CD4-positive, alpha-beta T cell (primary cell): ENCODE measurements at regions of chr6 and their contacts with region 1.

Region 1: DNA sequence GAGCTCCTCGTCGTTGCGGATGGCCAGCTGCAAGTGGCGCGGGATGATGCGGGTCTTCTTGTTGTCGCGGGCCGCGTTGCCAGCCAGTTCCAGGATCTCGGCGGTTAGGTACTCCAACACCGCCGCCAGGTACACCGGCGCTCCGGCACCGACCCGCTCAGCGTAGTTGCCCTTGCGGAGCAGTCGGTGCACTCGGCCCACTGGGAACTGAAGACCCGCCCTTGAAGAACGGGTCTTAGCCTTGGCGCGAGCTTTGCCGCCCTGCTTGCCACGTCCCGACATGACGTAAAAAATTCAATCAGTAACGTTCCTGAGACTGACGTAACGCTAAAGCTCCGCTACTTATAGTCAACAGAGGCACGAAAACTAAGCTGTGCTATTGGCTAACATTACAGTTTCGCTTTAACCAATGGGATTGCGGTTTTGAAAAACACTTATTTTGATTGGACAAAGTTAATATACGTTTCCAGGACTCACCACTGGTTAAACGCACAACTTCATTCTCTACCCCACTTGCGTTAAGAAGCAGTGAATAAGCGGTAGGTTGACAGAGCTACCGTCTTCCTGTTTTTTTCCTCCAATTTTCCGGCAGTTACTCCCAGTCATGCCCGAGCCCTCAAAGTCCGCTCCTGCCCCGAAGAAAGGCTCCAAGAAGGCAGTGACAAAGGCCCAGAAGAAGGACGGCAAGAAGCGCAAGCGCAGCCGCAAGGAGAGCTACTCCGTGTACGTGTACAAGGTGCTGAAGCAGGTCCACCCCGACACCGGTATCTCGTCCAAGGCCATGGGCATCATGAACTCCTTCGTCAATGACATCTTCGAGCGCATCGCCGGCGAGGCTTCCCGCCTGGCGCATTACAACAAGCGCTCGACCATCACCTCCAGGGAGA is 73.9 kb downstream of the OR2B2 start:
- DNase-seq: peak; percentile 52 to 98 (median 73)
- ATAC-seq: peak; percentile 73
- H3K4me3 ChIP-seq: peak overlapping the region; percentile 83
- H3K4me3 Mint-ChIP-seq: no peak overlapping the region
- H3K27ac ChIP-seq: peak overlapping the region; percentile 92 to 97
- H3K27ac Mint-ChIP-seq: no peak overlapping the region
- H3K4me1 ChIP-seq: peaks cover 32% of the 10 kb centered on the region
- H3K4me1 Mint-ChIP-seq: peaks cover 6% of the 10 kb centered on the region
- H3K27me3 ChIP-seq: peaks cover 0 to 6% of the 10 kb centered on the region in 2 experiments
- H3K27me3 Mint-ChIP-seq: peaks cover 12% of the 10 kb centered on the region
- CTCF ChIP-seq: no peak

Region 2: GRCh38 chr6:26045065-26045927 is 1793.0 kb before region 1 on chr6:
- CTCF ChIA-PET with region 1: no interaction called
- POLR2A ChIA-PET with region 1: interaction called, 57 read pairs
- intact Hi-C with region 1: no loop called
- DNase-seq: peak; percentile 49 to 96 (median 74)
- ATAC-seq: peak; percentile 55
- H3K4me3 ChIP-seq: peak overlapping the region; percentile 70
- H3K4me3 Mint-ChIP-seq: peak overlapping the region; percentile 97
- H3K27ac ChIP-seq: peak overlapping the region; percentile 71 to 91
- H3K27ac Mint-ChIP-seq: peak overlapping the region; percentile 94
- H3K4me1 ChIP-seq: peaks cover 21% of the 10 kb centered on the region
- H3K4me1 Mint-ChIP-seq: peaks cover 28% of the 10 kb centered on the region
- H3K27me3 ChIP-seq: no peaks in the 10 kb centered on the region
- H3K27me3 Mint-ChIP-seq: no peaks in the 10 kb centered on the region
- CTCF ChIP-seq: no peak

Region 3: GRCh38 chr6:26234421-26235296 is 1603.6 kb before region 1 on chr6:
- CTCF ChIA-PET with region 1: no interaction called
- POLR2A ChIA-PET with region 1: interaction called, 52 read pairs
- intact Hi-C with region 1: no loop called
- DNase-seq: peak; percentile 46 to 96 (median 67)
- ATAC-seq: peak; percentile 73
- H3K4me3 ChIP-seq: peak overlapping the region; percentile 66
- H3K4me3 Mint-ChIP-seq: peak overlapping the region; percentile 100
- H3K27ac ChIP-seq: peak overlapping the region; percentile 78 to 87
- H3K27ac Mint-ChIP-seq: peak overlapping the region; percentile 99
- H3K4me1 ChIP-seq: peaks cover 19% of the 10 kb centered on the region
- H3K4me1 Mint-ChIP-seq: peaks cover 42% of the 10 kb centered on the region
- H3K27me3 ChIP-seq: no peaks in the 10 kb centered on the region
- H3K27me3 Mint-ChIP-seq: peaks cover 8% of the 10 kb centered on the region
- CTCF ChIP-seq: no peak

Region 4: DNA sequence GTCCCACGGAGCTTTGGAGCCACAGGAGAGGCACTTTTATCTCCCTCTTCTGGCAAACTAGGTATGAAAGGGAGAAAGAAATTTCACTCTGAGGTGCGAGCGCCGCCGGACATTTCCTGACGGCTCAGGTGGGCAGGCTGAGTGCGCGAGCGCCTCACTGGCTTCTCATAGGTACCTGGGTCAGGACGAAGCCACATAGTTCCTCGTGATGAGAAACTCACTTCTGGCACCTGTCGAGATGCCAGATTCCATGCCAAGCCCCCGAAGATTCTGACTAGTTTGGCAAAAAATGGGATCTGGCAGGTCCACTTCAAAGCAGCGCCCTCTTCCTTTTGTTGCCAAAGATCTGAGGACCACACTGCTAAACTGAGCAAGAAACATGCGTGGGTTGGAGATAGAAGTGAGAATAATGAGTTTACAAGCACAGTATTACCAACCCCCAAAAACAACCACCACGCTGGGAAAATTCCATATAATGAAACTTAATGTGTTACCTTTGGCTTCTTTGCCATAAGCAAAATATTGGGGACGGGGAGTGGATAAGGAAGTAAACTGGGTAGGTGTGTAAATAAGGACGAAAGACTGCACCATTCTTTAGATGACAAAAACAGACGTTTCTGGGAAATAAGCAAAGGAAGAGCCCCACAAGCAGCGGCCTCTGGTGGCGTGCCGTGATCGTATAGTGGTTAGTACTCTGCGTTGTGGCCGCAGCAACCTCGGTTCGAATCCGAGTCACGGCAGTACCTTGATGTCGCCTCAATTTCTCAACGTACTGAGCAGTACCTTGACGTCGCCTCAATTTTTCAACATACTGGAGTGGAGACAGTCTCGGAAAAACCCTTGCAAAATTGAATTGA is 680.6 kb before region 1 on chr6:
- CTCF ChIA-PET with region 1: no interaction called
- POLR2A ChIA-PET with region 1: interaction called, 10 read pairs
- intact Hi-C with region 1: no loop called
- DNase-seq: peak; percentile 73 to 93 (median 85)
- ATAC-seq: peak; percentile 88
- H3K4me3 ChIP-seq: peak overlapping the region; percentile 59
- H3K4me3 Mint-ChIP-seq: peak overlapping the region; percentile 90
- H3K27ac ChIP-seq: peak overlapping the region in 1 of 2 donors; percentile 32
- H3K27ac Mint-ChIP-seq: peak overlapping the region; percentile 96
- H3K4me1 ChIP-seq: peaks cover 22% of the 10 kb centered on the region
- H3K4me1 Mint-ChIP-seq: peaks cover 44% of the 10 kb centered on the region
- H3K27me3 ChIP-seq: no peaks in the 10 kb centered on the region
- H3K27me3 Mint-ChIP-seq: peaks cover 7% of the 10 kb centered on the region
- CTCF ChIP-seq: peak; percentile 78

Region 5: DNA sequence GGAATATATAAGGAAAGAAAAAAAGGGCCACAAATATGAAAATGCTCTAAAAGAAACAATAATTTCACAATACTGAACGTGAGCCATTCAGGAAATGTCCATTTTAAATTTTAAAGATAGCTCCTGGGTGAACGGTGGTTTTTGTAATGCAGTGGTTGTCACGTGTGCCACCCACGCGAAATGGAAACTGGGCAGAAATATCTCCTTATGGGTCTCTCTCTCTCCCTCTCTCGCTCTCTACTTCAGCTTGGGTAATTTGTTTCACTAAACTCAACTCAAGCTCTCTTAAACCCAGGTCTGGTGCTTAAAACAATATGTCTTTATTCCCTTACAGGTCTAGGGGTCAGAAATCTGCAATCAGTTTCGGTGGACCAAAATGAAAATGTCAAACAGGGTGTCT is 76.9 kb before region 1 on chr6:
- CTCF ChIA-PET with region 1: no interaction called
- POLR2A ChIA-PET with region 1: interaction called, 22 read pairs
- intact Hi-C with region 1: no loop called
- DNase-seq: peak in 2 of 14 experiments; percentile 11 to 17
- ATAC-seq: peak; percentile 41
- H3K4me3 ChIP-seq: no peak overlapping the region
- H3K4me3 Mint-ChIP-seq: peak overlapping the region; percentile 94
- H3K27ac ChIP-seq: no peak overlapping the region
- H3K27ac Mint-ChIP-seq: peak overlapping the region; percentile 98
- H3K4me1 ChIP-seq: peaks cover 14% of the 10 kb centered on the region
- H3K4me1 Mint-ChIP-seq: peaks cover 40% of the 10 kb centered on the region
- H3K27me3 ChIP-seq: no peaks in the 10 kb centered on the region
- H3K27me3 Mint-ChIP-seq: peaks cover 2% of the 10 kb centered on the region
- CTCF ChIP-seq: no peak

Region 6: DNA sequence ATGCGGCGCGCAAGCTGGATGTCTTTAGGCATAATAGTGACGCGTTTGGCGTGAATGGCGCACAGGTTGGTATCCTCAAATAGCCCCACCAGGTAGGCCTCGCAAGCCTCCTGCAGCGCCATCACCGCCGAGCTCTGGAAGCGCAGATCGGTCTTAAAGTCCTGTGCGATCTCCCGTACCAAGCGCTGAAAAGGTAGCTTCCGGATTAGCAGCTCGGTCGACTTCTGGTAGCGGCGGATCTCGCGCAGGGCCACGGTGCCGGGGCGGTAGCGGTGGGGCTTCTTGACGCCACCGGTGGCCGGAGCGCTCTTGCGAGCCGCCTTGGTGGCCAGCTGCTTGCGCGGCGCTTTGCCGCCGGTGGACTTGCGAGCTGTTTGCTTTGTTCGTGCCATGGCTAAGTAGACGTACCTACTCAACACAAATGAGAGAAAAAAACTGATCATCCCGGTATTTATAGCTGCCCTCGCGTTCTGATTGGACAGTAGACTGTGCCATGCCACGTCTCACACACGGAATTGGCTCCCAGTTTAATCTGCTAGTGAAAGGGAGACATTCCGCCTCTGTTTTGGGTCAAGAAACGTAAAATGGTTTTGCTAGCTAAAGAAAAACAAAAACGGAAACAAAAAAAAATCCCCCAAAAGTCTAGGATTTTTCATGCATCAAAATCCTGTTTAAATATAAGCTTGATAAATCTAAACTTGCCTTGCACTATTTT is 33.8 kb after region 1 on chr6:
- CTCF ChIA-PET with region 1: interaction called, 34 read pairs
- POLR2A ChIA-PET with region 1: interaction called, 1,427 read pairs
- intact Hi-C with region 1: loop called (anchors 2 kb)
- DNase-seq: peak; percentile 71 to 97 (median 82)
- ATAC-seq: peak; percentile 75
- H3K4me3 ChIP-seq: peak overlapping the region; percentile 86
- H3K4me3 Mint-ChIP-seq: peak overlapping the region; percentile 93
- H3K27ac ChIP-seq: peak overlapping the region; percentile 89
- H3K27ac Mint-ChIP-seq: peak overlapping the region; percentile 93
- H3K4me1 ChIP-seq: peaks cover 39% of the 10 kb centered on the region
- H3K4me1 Mint-ChIP-seq: peaks cover 41% of the 10 kb centered on the region
- H3K27me3 ChIP-seq: no peaks in the 10 kb centered on the region
- H3K27me3 Mint-ChIP-seq: no peaks in the 10 kb centered on the region
- CTCF ChIP-seq: peak; percentile 43